ENCODE measurements at regions of chr17 and their contacts with region 1.

Region 1: DNA sequence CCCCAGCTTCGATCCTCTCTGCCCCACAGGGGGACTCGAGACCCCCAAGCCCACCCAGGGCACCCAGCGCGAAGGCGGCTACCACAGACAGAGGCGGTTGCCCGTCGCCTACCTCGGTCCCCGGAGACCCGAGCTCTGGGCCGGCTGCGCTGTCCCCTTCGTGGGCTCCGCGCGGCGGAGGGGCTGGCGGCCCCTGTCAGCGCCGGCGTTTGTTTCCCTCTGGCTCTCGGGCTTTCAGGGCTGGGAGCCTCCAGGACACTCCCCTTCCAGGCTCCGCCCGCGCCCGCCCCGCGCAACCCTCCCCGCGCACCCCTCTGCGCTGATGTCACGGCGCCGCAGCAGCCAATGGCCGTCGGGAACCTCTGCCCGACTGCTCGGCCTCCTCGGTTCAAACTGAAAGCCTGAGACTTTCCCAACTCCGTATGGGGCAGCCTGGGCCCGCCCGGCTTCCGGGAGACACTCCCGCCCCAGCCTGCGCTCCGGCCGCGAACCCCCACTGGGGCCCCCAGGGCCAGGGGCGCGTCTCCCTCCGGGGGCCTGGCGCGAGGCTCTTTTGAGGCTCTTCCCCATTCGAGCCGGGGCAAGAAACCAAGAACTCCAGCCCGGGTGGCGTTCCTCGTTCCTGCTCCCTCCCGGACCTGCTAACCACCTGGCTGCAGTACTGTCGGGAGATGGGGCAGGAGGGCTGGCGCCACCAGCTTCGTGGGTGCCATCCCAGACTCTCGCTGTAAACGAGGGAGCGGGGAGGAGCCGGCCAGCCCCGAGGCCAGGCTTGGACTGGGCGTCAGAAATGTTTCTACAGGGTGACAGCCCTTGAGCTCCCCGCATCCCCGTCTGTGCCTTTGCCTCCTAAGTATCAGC is at the start of gene CDC42EP4:
- DNase-seq: peak; percentile 98
- H3K4me3 ChIP-seq: peak within 1 kb of the TSS; percentile 97
- H3K27ac ChIP-seq: peak within 1 kb of the TSS; percentile 98
- H3K4me1 ChIP-seq: peaks cover 1% of the 10 kb centered on the region
- H3K27me3 ChIP-seq: no peaks in the 10 kb centered on the region
- CTCF ChIP-seq: no peak
- total RNA-seq, gene CDC42EP4: 52.8 to 65.3 TPM

Region 2: GRCh38 chr17:73255671-73256181 is 56.3 kb before region 1 on chr17:
- intact Hi-C with region 1: loop called (anchors 5 kb)
- DNase-seq: peak; percentile 51
- H3K4me3 ChIP-seq: no peak overlapping the region
- H3K27ac ChIP-seq: no peak overlapping the region
- H3K4me1 ChIP-seq: no peaks in the 10 kb centered on the region
- H3K27me3 ChIP-seq: no peaks in the 10 kb centered on the region
- CTCF ChIP-seq: peak; percentile 98

Region 3: DNA sequence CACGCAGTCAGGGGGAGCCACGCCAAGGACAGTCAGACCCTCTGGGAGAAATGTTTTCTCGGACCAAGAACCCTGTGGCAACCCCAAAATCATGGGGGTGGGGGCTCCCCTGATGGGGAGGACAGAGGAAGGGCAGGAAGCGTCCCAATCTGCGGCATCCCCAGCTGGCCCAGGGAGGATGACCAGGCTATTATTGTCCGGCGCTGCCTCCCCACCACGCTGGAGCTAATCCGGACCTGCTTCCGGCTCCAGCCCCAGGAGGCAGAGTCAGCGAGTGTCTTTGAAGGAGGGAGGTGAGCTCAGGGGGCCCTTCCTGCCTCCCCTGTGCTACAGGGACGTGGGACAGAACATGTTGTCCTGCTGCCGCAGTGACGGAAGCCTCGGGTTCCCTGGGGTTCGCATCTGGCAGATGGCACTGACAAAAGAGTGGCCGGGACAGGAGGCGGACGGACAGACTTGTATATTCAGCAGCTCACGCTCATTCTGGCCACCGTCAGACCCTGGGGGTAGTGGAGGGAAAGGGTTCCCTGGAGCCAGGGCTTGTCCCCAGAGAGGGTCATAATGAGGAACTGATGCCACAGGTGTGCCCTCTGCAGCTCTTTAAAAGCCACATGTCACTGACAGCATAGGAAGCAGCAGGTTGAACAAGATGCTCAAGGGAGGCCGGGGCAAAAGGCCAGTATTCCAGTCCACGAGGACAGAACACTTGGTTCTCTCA is 54.1 kb after region 1 on chr17:
- intact Hi-C with region 1: loop called (anchors 5 kb)
- DNase-seq: no peak
- H3K4me3 ChIP-seq: no peak overlapping the region
- H3K27ac ChIP-seq: no peak overlapping the region
- H3K4me1 ChIP-seq: no peaks in the 10 kb centered on the region
- H3K27me3 ChIP-seq: no peaks in the 10 kb centered on the region
- CTCF ChIP-seq: no peak